ENCODE measurements at regions of chr13 and their contacts with region 1.

Region 1: GRCh38 chr13:41780715-41781706 is 179.9 kb downstream of the VWA8 start:
- DNase-seq: peak; percentile 29 to 74
- H3K4me3 ChIP-seq: peak overlapping the region; percentile 20; the same call in 1 of the 2 replicates
- H3K27ac ChIP-seq: peak overlapping the region; percentile 72
- H3K4me1 ChIP-seq: peaks cover 19% of the 10 kb centered on the region
- H3K27me3 ChIP-seq: no peaks in the 10 kb centered on the region
- CTCF ChIP-seq: no peak

Region 2: DNA sequence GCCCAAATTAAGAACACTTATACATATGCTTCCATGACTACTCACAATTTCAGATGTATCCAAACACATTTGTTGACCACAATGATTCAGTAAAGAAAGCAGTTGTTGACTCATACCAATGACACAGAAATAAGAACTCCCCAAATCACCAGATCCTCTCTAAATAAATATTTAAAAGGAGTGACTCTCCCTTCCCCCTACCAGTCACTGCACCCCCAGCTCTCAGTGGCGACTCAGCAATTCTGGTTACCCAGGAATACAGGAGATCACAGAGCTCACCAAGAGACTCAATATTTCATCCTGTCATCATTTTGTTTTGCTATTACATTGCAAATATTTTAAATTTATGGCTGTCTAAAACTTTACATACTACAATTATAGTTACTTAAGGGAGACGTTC is 192.1 kb before region 1 on chr13:
- CTCF ChIA-PET with region 1: no interaction called
- POLR2A ChIA-PET with region 1: no interaction called
- intact Hi-C with region 1: no loop called
- DNase-seq: peak; percentile 46 to 85
- H3K4me3 ChIP-seq: no peak overlapping the region
- H3K27ac ChIP-seq: peak overlapping the region; percentile 89
- H3K4me1 ChIP-seq: peaks cover 33% of the 10 kb centered on the region
- H3K27me3 ChIP-seq: no peaks in the 10 kb centered on the region
- CTCF ChIP-seq: no peak

Region 3: DNA sequence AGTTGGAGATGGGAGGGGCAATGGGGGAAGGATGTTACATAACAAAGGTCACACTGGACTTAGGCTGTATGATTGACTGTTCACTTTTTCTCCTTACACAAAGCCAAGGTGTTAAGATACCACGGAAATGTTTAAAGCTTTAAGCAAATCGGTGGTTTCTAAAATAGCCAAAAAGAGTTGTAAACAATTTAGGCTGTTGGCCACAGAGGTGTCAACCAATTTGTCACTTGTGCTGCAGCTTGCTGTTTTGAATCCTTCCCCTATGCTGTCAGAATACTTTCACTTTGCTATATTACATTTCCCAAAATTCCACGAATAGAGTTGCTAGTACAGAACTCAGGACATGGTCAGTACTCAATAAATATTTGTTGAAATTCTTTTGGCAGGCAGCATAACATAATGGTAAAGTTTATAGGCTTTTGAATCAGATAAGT is 30.6 kb after region 1 on chr13:
- CTCF ChIA-PET with region 1: no interaction called
- POLR2A ChIA-PET with region 1: interaction called, 14 read pairs
- intact Hi-C with region 1: no loop called
- DNase-seq: no peak
- H3K4me3 ChIP-seq: no peak overlapping the region
- H3K27ac ChIP-seq: no peak overlapping the region
- H3K4me1 ChIP-seq: no peaks in the 10 kb centered on the region
- H3K27me3 ChIP-seq: no peaks in the 10 kb centered on the region
- CTCF ChIP-seq: no peak

Region 4: GRCh38 chr13:41842036-41842620 is 61.1 kb after region 1 on chr13:
- CTCF ChIA-PET with region 1: no interaction called
- POLR2A ChIA-PET with region 1: interaction called, 15 read pairs
- intact Hi-C with region 1: no loop called
- DNase-seq: no peak
- H3K4me3 ChIP-seq: no peak overlapping the region
- H3K27ac ChIP-seq: no peak overlapping the region
- H3K4me1 ChIP-seq: no peaks in the 10 kb centered on the region
- H3K27me3 ChIP-seq: no peaks in the 10 kb centered on the region
- CTCF ChIP-seq: no peak